ENCODE measurements at regions of chr12 and their contacts with region 1.

Region 1: GRCh38 chr12:53295070-53295890 is at the start of gene PFDN5:
- DNase-seq: peak; percentile 91
- total RNA-seq, gene PFDN5: 537 and 754 TPM in 2 replicates

Region 2: GRCh38 chr12:52980693-52981423 is 314.4 kb before region 1 on chr12:
- in situ Hi-C with region 1: no loop called
- DNase-seq: peak; percentile 94

Region 3: DNA sequence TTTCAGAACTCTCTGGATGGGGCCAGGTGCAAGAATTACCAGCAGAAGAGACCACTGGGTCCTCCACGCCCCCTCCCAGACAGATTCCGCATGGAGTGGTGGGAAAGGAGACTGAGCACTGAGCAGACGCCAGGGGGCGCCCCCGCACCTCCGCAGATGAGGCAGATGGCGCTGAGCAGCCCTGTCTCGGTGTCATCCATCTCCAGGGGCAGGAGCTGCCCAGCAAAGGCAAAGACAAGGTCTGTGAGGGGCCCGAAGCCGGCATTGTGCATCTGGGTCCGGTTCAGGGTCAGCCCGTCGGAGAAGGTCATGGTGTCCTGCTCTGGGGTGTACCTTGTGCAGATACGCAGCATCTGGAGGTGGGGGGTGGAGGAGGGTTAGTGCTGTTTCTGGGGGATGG is 81.9 kb before region 1 on chr12:
- in situ Hi-C with region 1: loop called (anchors 10 kb)
- DNase-seq: peak; percentile 68

Measured in Caki2 (cell line).